ENCODE measurements at regions of chr11 and their contacts with region 1.

Region 1: DNA sequence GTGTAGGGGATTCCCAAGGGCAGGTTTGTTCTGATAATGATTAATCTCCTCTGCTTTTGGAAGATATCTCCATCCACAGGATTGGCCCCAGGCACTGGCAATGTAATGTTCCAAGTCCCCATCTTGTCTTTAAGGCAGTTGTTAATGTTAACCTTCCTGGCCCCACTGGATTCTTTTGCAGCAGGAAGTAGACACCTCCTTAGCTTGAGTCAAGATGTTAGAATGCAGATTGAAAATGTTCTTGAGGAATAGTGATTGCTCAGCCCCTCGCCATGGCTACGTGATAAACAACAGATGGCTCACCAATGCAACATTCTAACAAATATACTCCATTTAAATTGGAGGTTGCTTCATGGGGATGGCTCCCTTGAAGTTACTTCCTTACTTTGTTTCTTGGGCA is 7.3 kb downstream of the HEPHL1 start:
- DNase-seq: peak; percentile 92
- H3K4me3 ChIP-seq: no peak overlapping the region
- H3K27ac ChIP-seq: peak overlapping the region; percentile 92
- H3K4me1 ChIP-seq: peaks cover 45% of the 10 kb centered on the region
- H3K27me3 ChIP-seq: no peaks in the 10 kb centered on the region
- CTCF ChIP-seq: no peak

Region 2: DNA sequence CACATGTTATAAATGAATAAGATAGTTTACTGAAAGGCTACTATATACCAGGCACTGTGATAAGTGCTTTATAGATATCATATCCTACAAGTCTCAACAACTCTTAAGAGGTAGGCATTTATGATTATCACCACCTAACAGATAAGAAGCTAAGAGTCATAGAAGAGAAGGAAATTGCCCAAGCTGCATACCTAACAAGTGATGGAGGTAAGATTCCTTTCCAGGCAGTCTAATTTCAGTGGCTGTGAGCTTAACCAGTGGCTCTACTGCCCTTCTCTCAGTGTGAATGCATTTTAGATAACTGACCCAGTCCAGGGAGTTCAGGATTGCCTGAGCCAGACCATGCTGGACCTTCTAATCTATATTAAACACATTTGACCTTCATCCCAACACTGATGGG is 32.0 kb after region 1 on chr11:
- CTCF ChIA-PET with region 1: no interaction called
- dilution Hi-C with region 1: no loop called
- in situ Hi-C with region 1: no loop called
- intact Hi-C with region 1: loop called (anchors 1 kb)
- DNase-seq: peak; percentile 75
- H3K4me3 ChIP-seq: no peak overlapping the region
- H3K27ac ChIP-seq: no peak overlapping the region
- H3K4me1 ChIP-seq: peaks cover 21% of the 10 kb centered on the region
- H3K27me3 ChIP-seq: no peaks in the 10 kb centered on the region
- CTCF ChIP-seq: no peak

Region 3: GRCh38 chr11:94077552-94078293 is 49.3 kb after region 1 on chr11:
- CTCF ChIA-PET with region 1: no interaction called
- dilution Hi-C with region 1: no loop called
- in situ Hi-C with region 1: no loop called
- intact Hi-C with region 1: no loop called
- DNase-seq: no peak
- H3K4me3 ChIP-seq: no peak overlapping the region
- H3K27ac ChIP-seq: no peak overlapping the region
- H3K4me1 ChIP-seq: peaks cover 4% of the 10 kb centered on the region
- H3K27me3 ChIP-seq: no peaks in the 10 kb centered on the region
- CTCF ChIP-seq: no peak

Region 4: DNA sequence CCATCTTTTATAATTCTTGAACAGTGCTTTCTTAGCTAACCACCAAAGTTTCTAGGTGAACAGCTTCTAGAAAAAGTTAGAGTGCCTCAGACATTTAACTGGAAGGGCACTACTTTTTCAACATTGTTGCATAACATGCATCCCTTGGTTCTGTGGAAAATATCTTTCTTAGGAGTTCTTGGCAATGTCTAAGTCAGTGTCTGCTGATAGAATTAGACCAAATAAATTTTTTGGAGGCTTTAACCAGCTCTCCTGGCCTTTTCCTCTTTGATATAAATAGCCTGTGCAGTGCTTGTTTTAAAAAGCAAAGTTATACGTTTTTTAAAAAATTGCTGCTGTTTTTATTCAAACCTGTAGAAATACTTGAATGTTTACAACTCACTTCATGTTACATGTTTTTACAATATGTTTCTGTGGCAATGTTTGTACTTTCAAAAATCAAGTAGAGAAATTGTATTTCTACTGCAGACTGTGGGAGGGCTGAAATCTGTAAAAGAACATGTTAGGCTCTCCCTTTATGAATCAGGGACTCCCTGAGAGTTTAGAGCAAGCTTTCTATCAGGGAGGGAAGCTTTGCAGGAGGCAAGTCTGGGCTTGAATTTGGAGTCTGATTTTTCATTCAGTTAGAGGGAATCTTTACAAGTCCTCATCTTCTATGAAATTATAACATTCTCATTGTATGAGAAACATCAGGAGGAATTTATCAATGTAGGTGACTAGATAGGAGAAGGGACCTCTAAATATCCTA is 83.9 kb after region 1 on chr11:
- CTCF ChIA-PET with region 1: no interaction called
- dilution Hi-C with region 1: loop called (anchors 5 kb)
- in situ Hi-C with region 1: no loop called
- intact Hi-C with region 1: no loop called
- DNase-seq: peak; percentile 76
- H3K4me3 ChIP-seq: no peak overlapping the region
- H3K27ac ChIP-seq: peak overlapping the region; percentile 52
- H3K4me1 ChIP-seq: peaks cover 37% of the 10 kb centered on the region
- H3K27me3 ChIP-seq: no peaks in the 10 kb centered on the region
- CTCF ChIP-seq: no peak

Region 5: DNA sequence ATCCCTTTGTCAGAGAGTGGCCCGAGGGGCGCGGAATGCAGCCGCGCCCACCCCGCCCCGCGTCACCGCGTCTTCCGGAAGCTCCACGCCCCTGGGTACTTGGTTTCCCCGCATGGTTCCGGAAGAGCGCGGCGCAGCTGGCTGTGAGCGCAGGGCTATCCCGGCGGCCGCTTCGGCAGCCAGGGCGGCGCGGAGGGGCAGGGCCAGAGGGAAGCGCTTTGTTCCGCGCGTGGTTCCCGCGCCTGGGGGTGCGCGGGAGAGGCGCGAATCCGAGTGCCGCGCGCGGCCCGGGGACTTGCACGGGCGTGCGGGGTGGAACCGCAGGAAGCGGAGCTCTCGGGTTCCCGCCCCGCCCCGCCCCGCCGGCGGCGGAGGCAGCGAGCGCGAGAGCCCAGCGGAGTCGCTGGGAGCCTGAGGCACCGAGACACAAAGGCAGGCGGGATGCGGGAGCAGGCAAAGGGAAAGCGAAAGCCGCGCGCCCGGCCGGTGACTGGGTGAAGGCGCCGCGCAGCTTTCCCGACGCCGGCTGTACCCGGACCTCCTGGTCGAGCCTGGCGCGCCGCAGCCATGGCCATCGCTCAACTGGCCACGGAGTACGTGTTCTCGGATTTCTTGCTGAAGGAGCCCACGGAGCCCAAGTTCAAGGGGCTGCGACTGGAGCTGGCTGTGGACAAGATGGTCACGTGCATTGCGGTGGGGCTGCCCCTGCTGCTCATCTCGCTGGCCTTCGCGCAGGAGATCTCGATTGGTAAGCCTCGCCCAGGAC is 100.5 kb after region 1 on chr11 and contains the start of gene PANX1:
- CTCF ChIA-PET with region 1: no interaction called
- dilution Hi-C with region 1: no loop called
- in situ Hi-C with region 1: no loop called
- intact Hi-C with region 1: loop called (anchors 1 kb)
- DNase-seq: peak; percentile 91
- H3K4me3 ChIP-seq: peak within 1 kb of the TSS; percentile 56 to 97 (median 56)
- H3K27ac ChIP-seq: peak within 1 kb of the TSS; percentile 92
- H3K4me1 ChIP-seq: peaks cover 48% of the 10 kb centered on the region
- H3K27me3 ChIP-seq: no peaks in the 10 kb centered on the region
- CTCF ChIP-seq: no peak
- total RNA-seq, gene PANX1: 42.1 to 48.2 TPM

Region 6: DNA sequence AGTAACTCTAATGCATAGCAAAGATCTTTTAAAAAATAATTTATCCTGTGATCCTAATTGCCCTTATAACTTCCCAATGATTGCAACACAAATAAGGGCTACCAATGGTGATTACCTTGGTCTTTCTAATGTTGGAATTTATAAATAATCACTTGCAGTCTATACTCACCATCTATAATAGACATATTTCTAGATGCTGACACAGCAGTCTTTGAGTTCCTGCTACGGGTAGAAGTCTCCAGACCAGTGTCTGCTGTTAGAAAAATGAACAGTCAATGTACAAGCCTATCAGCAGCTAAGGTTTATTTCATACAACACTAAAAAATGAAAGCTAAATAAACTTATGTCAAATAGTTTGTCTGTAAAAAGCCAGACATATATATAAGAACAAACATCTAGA is 417.2 kb after region 1 on chr11:
- CTCF ChIA-PET with region 1: no interaction called
- dilution Hi-C with region 1: no loop called
- in situ Hi-C with region 1: no loop called
- intact Hi-C with region 1: no loop called
- DNase-seq: no peak
- H3K4me3 ChIP-seq: no peak overlapping the region
- H3K27ac ChIP-seq: no peak overlapping the region
- H3K4me1 ChIP-seq: peaks cover 11% of the 10 kb centered on the region
- H3K27me3 ChIP-seq: no peaks in the 10 kb centered on the region
- CTCF ChIP-seq: no peak